ENCODE measurements at regions of chr2 and their contacts with region 1.

Region 1: DNA sequence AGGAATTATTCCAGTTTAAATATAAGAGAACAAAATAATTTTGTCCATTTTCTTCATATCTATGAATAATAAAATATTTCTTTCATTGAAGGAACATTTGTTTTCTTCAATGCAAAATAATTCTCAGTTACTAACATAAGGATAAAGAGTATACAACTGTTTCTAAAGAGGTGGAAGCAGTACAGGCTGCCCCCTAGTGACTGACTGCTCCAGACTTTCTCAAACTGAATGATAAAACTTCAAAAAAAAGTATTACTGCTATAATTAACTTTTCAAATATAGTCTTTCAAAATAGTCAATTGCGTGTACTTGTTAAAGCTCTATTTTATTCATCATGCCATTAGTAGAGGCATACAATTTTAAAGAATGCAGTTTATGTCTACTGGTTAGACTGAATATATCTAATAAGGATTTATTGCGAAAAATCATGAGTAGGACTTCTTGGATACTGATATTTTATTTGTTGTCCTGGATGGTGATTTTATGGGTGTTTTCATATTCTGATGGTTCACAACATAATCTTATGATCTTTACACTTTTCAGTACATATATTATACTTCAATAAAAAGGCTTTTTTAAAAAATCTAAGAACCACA is 100.1 kb downstream of the WDPCP start:
- DNase-seq: no peak
- ATAC-seq: no peak

Region 2: DNA sequence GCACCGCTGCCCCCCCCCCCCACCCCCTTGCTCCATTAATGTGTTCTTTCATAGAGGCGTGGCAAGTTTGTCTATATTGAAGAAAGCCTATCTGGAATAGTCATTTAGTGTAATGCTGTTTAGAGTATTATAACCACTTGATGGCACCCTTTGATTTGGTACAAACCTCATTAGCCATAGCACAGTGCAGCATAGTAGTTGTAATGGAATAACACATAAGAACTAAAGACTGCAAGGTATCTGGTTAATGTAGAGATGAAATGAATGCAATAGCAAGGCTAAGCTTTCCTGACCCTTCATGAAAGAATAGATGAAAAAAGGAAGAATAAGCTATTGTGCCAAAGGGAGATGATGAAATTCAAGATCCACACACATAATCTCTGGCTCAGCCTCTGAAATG is 700.8 kb before region 1 on chr2:
- intact Hi-C with region 1: loop called (anchors 5 kb)
- DNase-seq: no peak
- ATAC-seq: peak; percentile 69